ENCODE measurements at regions of chr4 and their contacts with region 1.

Region 1: GRCh38 chr4:106369456-106370060 is 980 bp upstream of the GIMD1 start:
- DNase-seq: no peak
- H3K4me3 Mint-ChIP-seq: no peak overlapping the region
- H3K27ac Mint-ChIP-seq: no peak overlapping the region
- H3K4me1 Mint-ChIP-seq: peaks cover 4% of the 10 kb centered on the region
- H3K27me3 Mint-ChIP-seq: peaks cover 9% of the 10 kb centered on the region

Region 2: DNA sequence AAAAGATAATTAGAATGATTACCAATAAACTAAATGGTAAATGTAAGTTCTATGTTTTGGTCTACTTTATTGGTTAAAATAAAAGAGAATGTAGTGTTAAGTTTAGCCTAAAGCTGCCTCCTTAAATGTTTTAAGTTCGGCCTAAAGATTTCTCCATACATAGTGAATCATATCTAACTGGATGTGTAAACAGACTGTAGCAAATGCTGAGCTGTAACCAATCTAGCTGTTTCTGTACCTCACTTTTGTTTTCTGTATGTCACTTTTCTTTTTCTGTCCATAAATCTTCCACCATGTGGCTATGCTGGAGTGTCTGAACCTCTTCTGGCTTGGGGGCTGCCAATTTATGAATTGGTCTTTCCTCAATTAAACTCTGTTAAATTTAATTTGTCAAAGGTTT is 174.8 kb before region 1 on chr4:
- intact Hi-C with region 1: no loop called
- DNase-seq: no peak
- H3K4me3 Mint-ChIP-seq: no peak overlapping the region
- H3K27ac Mint-ChIP-seq: no peak overlapping the region
- H3K4me1 Mint-ChIP-seq: no peaks in the 10 kb centered on the region
- H3K27me3 Mint-ChIP-seq: no peaks in the 10 kb centered on the region

Region 3: DNA sequence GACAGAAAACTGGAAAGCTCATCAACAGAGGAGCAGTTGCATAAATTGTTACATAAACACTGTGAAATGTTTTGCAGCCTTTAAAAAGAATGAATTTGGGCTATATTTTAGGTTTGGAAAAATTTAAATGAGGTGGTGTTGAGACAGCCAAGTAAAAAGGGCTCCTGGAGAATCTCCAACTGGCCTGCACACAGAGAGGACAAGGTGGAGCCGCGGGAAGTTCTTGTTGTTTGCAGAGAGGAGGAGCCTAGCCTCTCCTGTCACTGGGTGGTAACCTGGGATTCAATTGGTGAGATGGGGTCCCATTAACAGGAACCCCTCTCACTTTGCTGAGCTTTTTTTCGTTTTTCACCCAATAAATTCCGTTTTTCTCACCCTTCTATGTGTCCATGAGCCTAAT is 14.4 kb before region 1 on chr4:
- intact Hi-C with region 1: no loop called
- DNase-seq: no peak
- H3K4me3 Mint-ChIP-seq: no peak overlapping the region
- H3K27ac Mint-ChIP-seq: no peak overlapping the region
- H3K4me1 Mint-ChIP-seq: peaks cover 3% of the 10 kb centered on the region
- H3K27me3 Mint-ChIP-seq: peaks cover 4% of the 10 kb centered on the region

Region 4: GRCh38 chr4:106384878-106385277 is 15.3 kb after region 1 on chr4:
- intact Hi-C with region 1: no loop called
- DNase-seq: no peak
- H3K4me3 Mint-ChIP-seq: no peak overlapping the region
- H3K27ac Mint-ChIP-seq: no peak overlapping the region
- H3K4me1 Mint-ChIP-seq: no peaks in the 10 kb centered on the region
- H3K27me3 Mint-ChIP-seq: no peaks in the 10 kb centered on the region

Region 5: GRCh38 chr4:106818764-106819163 is 449.2 kb after region 1 on chr4:
- intact Hi-C with region 1: loop called (anchors 10 kb)
- DNase-seq: no peak
- H3K4me3 Mint-ChIP-seq: no peak overlapping the region
- H3K27ac Mint-ChIP-seq: no peak overlapping the region
- H3K4me1 Mint-ChIP-seq: no peaks in the 10 kb centered on the region
- H3K27me3 Mint-ChIP-seq: no peaks in the 10 kb centered on the region